ENCODE measurements at regions of chr4 and their contacts with region 1.

Region 1: GRCh38 chr4:48269861-48270522 is 354 bp upstream of the TEC start:
- DNase-seq: peak; percentile 94 to 95
- H3K4me3 ChIP-seq: peak overlapping the region; percentile 86 to 92
- H3K27ac ChIP-seq: peak overlapping the region; percentile 81 to 82
- H3K4me1 ChIP-seq: peaks cover 0 to 12% (median 4%) of the 10 kb centered on the region in 4 donors
- H3K27me3 ChIP-seq: no peaks in the 10 kb centered on the region
- CTCF ChIP-seq: peak; percentile 5 to 24

Region 2: GRCh38 chr4:48337731-48338130 is 67.7 kb after region 1 on chr4:
- intact Hi-C with region 1: loop called (anchors 2 kb)
- DNase-seq: no peak
- H3K4me3 ChIP-seq: no peak overlapping the region
- H3K27ac ChIP-seq: peak overlapping the region in 1 of 2 donors; percentile 11
- H3K4me1 ChIP-seq: peaks cover 0 to 15% (median 2%) of the 10 kb centered on the region in 4 donors
- H3K27me3 ChIP-seq: no peaks in the 10 kb centered on the region
- CTCF ChIP-seq: no peak

Region 3: DNA sequence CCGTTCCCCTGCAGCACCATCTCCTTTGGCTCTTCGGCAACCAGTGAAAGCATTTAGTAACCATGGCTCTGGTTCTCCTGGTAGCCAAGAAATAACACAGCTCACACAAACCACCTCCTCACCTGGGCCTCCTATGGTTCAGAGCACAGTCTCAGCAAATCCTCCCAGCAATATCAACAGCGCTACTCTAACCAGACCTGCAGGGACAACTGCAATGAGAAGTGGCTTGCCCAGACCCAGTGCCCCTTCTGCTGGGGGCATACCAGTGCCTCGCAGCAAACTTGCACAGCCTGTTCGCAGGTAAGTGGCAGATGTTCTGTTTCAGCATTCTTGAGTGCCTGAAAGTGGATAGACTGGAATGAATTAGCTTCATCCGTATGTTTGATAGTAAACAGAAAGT is 150.2 kb after region 1 on chr4:
- intact Hi-C with region 1: no loop called
- DNase-seq: no peak
- H3K4me3 ChIP-seq: no peak overlapping the region
- H3K27ac ChIP-seq: no peak overlapping the region
- H3K4me1 ChIP-seq: no peaks in the 10 kb centered on the region
- H3K27me3 ChIP-seq: no peaks in the 10 kb centered on the region
- CTCF ChIP-seq: no peak

Region 4: GRCh38 chr4:48602222-48602621 is 332.2 kb after region 1 on chr4:
- intact Hi-C with region 1: no loop called
- DNase-seq: no peak
- H3K4me3 ChIP-seq: no peak overlapping the region
- H3K27ac ChIP-seq: no peak overlapping the region
- H3K4me1 ChIP-seq: no peaks in the 10 kb centered on the region
- H3K27me3 ChIP-seq: no peaks in the 10 kb centered on the region
- CTCF ChIP-seq: no peak